SK-N-SH (cell line): ENCODE measurements at regions of chr19 and their contacts with region 1.

Region 1: GRCh38 chr19:6048808-6049405 is 61.4 kb downstream of the RFX2 start:
- DNase-seq: peak; percentile 91
- H3K4me3 ChIP-seq: peak overlapping the region in 1 of 2 experiments; percentile 5; a peak in 1 of 4 replicates
- H3K27ac ChIP-seq: peak overlapping the region in 1 of 2 experiments; percentile 35; a peak in 1 of 4 replicates
- H3K4me1 ChIP-seq: peaks cover 0 to 3% of the 10 kb centered on the region in 2 experiments; a peak in 1 of 4 replicates
- H3K27me3 ChIP-seq: no peaks in the 10 kb centered on the region
- CTCF ChIP-seq: peak; percentile 85
- EP300 ChIP-seq: no peak
- RAD21 ChIP-seq: peak; percentile 96

Region 2: DNA sequence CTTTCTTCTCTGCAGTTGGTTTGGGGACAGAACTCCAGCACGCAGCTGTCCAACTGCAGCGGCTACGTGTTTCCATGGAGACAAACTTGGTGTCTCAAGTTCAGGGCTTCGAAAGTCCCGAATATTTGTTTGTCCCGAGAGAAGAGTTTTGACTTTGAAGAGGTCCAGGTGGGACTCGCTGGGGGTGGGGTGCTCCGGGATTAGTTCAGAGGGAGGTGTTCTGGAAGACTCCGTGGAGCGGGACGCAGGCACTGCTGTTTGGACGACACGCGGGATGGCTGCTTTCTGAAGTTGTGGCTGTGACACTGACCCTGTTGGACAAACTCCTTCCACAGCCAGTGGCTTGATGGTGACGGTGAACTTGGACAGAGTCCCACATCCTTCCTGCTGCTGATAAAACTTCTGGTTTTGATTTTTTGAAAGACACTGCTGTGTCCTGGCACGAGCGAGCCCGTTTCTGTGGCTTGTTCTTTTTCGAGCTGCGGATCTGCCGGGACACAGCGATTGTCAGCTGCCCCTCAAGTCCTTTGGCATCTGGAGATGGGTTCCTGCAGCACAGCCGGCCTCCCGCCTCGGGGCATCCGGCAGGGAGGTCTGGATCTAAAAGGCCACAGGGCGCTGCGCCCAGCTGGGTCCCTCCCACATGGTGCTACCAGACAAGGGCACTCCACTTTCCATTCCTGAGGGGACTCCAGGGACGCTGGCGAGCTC is 55.1 kb before region 1 on chr19:
- CTCF ChIA-PET with region 1: interaction called, 50 read pairs
- POLR2A ChIA-PET with region 1: no interaction called
- DNase-seq: peak; percentile 93
- H3K4me3 ChIP-seq: no peak overlapping the region
- H3K27ac ChIP-seq: peak overlapping the region in 1 of 2 experiments; percentile 94; a peak in 2 of 4 replicates
- H3K4me1 ChIP-seq: peaks cover 0 to 32% of the 10 kb centered on the region in 2 experiments; a peak in 2 of 4 replicates
- H3K27me3 ChIP-seq: no peaks in the 10 kb centered on the region
- CTCF ChIP-seq: no peak
- EP300 ChIP-seq: peak in 1 of 2 experiments; percentile 84; a peak in 2 of 4 replicates
- RAD21 ChIP-seq: 0 out of 2 replicates have a peak, but pooled peaks have one; percentile 1

Region 3: DNA sequence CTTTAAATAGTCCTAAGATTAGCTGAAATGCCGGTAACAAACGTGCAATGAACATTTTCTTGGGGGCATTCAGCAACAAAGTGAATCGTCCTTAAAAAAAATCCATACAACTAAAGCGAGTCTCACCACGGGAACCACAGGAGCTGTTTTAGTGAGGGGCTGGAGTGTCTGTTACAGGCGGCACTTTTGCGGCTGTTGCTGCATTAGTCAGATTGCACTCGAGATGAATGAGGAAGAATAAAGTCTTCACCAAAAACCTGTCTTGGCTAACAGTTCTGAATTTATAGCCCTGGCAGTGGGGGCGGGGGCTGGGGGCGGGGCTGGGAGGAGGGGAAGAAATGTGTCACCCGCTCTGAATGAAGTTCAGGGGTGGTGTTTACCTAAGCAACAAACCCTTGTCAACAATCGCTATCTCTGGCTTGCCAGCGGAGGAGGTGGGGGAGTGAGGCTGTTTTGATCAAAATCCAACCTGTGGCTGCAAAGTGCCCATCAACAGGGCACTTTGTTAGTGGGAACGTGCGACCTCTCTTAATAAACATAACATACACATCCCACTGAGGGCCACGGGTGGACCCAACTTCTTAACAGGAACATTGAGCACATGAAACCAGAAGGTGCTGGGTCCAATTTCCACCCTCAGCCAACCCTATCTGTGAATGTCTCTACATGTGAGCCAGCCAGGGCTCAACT is 16.9 kb after region 1 on chr19:
- CTCF ChIA-PET with region 1: interaction called, 25 read pairs
- POLR2A ChIA-PET with region 1: no interaction called
- DNase-seq: no peak
- H3K4me3 ChIP-seq: no peak overlapping the region
- H3K27ac ChIP-seq: peak overlapping the region; percentile 78 to 99
- H3K4me1 ChIP-seq: peaks cover 28 to 43% of the 10 kb centered on the region in 2 experiments
- H3K27me3 ChIP-seq: no peaks in the 10 kb centered on the region
- CTCF ChIP-seq: no peak
- EP300 ChIP-seq: no peak
- RAD21 ChIP-seq: no peak

Region 4: GRCh38 chr19:6103217-6103644 is 54.3 kb after region 1 on chr19:
- CTCF ChIA-PET with region 1: interaction called, 10 read pairs
- POLR2A ChIA-PET with region 1: no interaction called
- DNase-seq: no peak
- H3K4me3 ChIP-seq: no peak overlapping the region
- H3K27ac ChIP-seq: peak overlapping the region; percentile 67 to 95; a peak in 3 of 4 replicates
- H3K4me1 ChIP-seq: peaks cover 16 to 20% of the 10 kb centered on the region in 2 experiments
- H3K27me3 ChIP-seq: no peaks in the 10 kb centered on the region
- CTCF ChIP-seq: no peak
- EP300 ChIP-seq: peak in 1 of 2 experiments; percentile 67; a peak in 1 of 4 replicates
- RAD21 ChIP-seq: no peak

Region 5: GRCh38 chr19:6125571-6125989 is 76.7 kb after region 1 on chr19:
- CTCF ChIA-PET with region 1: interaction called, 106 read pairs
- POLR2A ChIA-PET with region 1: no interaction called
- DNase-seq: peak; percentile 66
- H3K4me3 ChIP-seq: no peak overlapping the region
- H3K27ac ChIP-seq: no peak overlapping the region
- H3K4me1 ChIP-seq: no peaks in the 10 kb centered on the region
- H3K27me3 ChIP-seq: no peaks in the 10 kb centered on the region
- CTCF ChIP-seq: peak; percentile 96
- EP300 ChIP-seq: no peak
- RAD21 ChIP-seq: peak; percentile 86

Region 6: DNA sequence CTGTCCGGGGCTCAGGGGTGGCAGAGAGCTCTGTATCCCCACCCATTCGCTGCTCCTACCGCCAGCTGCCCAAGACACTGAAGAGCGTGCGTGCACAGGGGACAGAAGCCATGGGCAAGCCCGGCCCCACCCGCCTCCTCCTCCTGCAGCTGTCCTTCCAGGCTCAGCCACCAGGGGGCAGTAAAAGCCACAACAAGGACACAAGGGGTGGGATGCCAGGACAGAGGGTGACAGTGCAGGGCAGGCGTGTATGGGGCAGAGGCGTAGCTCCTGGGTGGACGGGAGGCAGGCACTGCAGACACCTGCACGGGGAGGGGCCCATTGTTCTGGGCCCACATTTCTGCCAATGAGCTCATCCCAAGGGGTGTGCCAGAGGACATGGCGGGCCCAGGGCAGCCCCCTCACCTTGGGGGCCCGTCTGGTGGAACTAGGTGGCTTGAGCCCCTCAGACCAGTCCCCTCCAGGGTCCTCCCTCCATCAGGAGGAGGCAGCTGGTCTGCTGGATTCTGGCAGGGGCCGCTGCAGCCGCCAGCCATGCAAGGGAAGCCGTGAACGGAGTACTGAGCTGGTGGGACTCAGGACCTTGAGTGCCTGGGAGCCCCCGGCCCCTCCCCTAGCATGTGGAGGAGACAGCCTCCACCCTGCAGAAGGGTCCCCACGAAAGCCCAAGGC is 169.7 kb after region 1 on chr19:
- CTCF ChIA-PET with region 1: interaction called, 14 read pairs
- POLR2A ChIA-PET with region 1: no interaction called
- DNase-seq: peak; percentile 97
- H3K4me3 ChIP-seq: peak overlapping the region in 1 of 2 experiments; percentile 9; a peak in 1 of 4 replicates
- H3K27ac ChIP-seq: peak overlapping the region in 1 of 2 experiments; percentile 51; a peak in 2 of 4 replicates
- H3K4me1 ChIP-seq: peaks cover 0 to 45% of the 10 kb centered on the region in 2 experiments; a peak in 1 of 4 replicates
- H3K27me3 ChIP-seq: no peaks in the 10 kb centered on the region
- CTCF ChIP-seq: peak; percentile 87
- EP300 ChIP-seq: no peak
- RAD21 ChIP-seq: peak; percentile 93